ENCODE measurements at regions of chr18 and their contacts with region 1.

Region 1: DNA sequence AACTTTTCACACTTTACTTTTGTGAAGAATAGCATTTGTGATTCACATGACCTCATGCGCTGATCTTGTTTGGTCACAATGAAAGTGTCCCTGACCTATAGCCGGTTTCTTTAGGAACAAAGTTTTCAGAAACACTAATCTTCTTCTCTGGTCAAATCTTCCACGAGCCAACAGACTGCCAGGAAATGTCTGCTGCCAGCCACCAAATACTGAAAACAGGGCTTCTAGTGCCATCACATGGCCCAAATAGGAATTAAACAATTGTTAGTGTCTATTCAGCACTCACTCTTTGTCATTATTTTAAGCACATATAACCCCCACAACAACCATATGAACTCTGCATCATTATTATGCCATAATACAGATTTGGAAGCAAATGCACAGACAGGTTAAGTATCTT is 286.5 kb upstream of the SYT4 start:
- DNase-seq: no peak

Region 2: GRCh38 chr18:42053188-42053781 is 1510.5 kb before region 1 on chr18:
- intact Hi-C with region 1: loop called (anchors 10 kb)
- DNase-seq: no peak

Region 3: DNA sequence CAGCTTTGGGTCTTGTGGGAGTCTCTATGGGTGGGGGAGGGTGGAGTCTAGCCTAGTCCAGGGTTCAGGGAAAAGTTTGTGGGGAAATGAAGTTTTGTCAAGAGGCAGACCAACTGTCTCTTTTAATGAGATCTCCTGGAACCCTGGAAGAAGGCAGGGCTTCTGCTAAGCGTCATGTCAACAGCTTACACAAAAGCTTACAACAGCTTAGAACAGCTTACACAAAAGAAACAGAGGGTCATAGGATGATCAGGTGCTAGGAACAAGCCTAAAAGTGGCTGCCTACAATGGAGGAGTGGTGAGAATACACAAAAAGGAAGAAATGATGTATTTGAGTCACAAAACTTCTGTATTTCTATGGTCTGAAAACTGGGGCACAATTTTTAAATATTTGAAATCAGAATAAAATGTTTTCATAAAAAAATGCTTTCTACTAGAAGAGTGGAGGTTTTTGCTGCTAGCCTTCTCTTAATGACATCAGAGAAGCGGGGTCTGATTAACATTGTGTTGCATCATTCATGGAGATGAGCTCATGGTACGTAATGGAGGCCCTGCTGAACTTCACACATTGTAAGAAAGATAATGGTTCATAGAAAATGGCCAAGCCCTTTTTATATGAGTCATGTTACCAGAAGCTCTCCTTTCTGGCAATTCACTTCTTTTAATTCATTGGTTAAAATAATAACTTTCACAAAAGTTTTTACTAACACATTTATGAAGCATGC is 1257.7 kb before region 1 on chr18:
- intact Hi-C with region 1: loop called (anchors 10 kb)
- DNase-seq: no peak

Region 4: GRCh38 chr18:43471873-43472272 is 91.9 kb before region 1 on chr18:
- intact Hi-C with region 1: no loop called
- DNase-seq: no peak

Measured in cardiac septum (tissue), 1 donor.